Activated CD8-positive, alpha-beta memory T cell treated with anti-CD3 and anti-CD28 coated beads, Interleukin-2, amount 10 ng/mL, durations not matched to agents 7 days and 5 days (primary cell): ENCODE measurements at regions of chr4 and their contacts with region 1.

Region 1: GRCh38 chr4:139030614-139031235 is 15.1 kb downstream of the NOCT start:
- DNase-seq: peak; percentile 84
- ATAC-seq: peak; percentile 80
- H3K4me3 Mint-ChIP-seq: no peak overlapping the region
- H3K27ac Mint-ChIP-seq: no peak overlapping the region
- H3K4me1 Mint-ChIP-seq: peaks cover 13% of the 10 kb centered on the region
- H3K27me3 Mint-ChIP-seq: no peaks in the 10 kb centered on the region

Region 2: GRCh38 chr4:139042981-139043460 is 12.3 kb after region 1 on chr4:
- CTCF ChIA-PET with region 1: interaction called, 12 read pairs
- DNase-seq: no peak
- ATAC-seq: no peak
- H3K4me3 Mint-ChIP-seq: no peak overlapping the region
- H3K27ac Mint-ChIP-seq: no peak overlapping the region
- H3K4me1 Mint-ChIP-seq: peaks cover 9% of the 10 kb centered on the region
- H3K27me3 Mint-ChIP-seq: no peaks in the 10 kb centered on the region

Region 3: GRCh38 chr4:139082750-139083510 is 52.2 kb after region 1 on chr4:
- CTCF ChIA-PET with region 1: interaction called, 53 read pairs
- DNase-seq: peak; percentile 98
- ATAC-seq: peak; percentile 90
- H3K4me3 Mint-ChIP-seq: peak overlapping the region; percentile 99
- H3K27ac Mint-ChIP-seq: peak overlapping the region; percentile 98
- H3K4me1 Mint-ChIP-seq: peaks cover 35% of the 10 kb centered on the region
- H3K27me3 Mint-ChIP-seq: no peaks in the 10 kb centered on the region

Region 4: GRCh38 chr4:139229534-139230039 is 198.9 kb after region 1 on chr4:
- CTCF ChIA-PET with region 1: interaction called, 13 read pairs
- DNase-seq: no peak
- ATAC-seq: peak; percentile 72
- H3K4me3 Mint-ChIP-seq: no peak overlapping the region
- H3K27ac Mint-ChIP-seq: no peak overlapping the region
- H3K4me1 Mint-ChIP-seq: peaks cover 2% of the 10 kb centered on the region
- H3K27me3 Mint-ChIP-seq: no peaks in the 10 kb centered on the region

Region 5: GRCh38 chr4:139315221-139315675 is 284.5 kb after region 1 on chr4:
- CTCF ChIA-PET with region 1: no interaction called
- DNase-seq: no peak
- ATAC-seq: no peak
- H3K4me3 Mint-ChIP-seq: no peak overlapping the region
- H3K27ac Mint-ChIP-seq: peak overlapping the region; percentile 78
- H3K4me1 Mint-ChIP-seq: peaks cover 61% of the 10 kb centered on the region
- H3K27me3 Mint-ChIP-seq: no peaks in the 10 kb centered on the region